PC-3 (cell line): ENCODE measurements at regions of chr3 and their contacts with region 1.

Region 1: DNA sequence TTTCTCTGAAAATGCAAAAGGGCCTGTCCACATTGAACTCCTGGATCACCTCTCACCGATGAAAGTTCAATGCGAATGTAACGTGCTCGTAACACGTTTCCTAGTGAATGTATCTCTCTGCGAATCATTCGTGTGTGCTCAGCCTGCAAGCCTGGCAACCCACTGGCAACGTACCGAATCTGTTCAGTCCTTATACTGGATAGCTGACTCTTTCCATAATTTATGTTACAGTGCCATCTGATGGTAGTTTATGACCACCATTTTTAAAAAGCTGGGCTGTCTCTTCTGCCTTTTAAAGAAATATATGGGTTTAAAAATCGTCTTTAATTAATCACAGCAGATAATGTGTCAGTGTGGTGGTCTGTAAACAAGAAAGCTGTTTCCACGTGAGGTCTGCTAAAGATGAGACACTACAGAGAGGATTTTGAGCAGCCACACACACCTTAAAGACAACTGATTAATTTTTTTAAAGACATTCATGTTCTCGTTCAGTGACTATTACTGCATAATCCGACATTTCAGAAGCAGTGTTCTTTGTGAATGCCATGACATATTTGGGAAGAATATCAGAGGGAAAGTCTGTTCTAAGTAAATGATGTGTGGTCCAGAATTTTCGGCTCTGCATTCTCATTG is 69.4 kb upstream of the FOXP1 start:
- DNase-seq: peak; percentile 76
- ATAC-seq: peak; percentile 76
- H3K4me3 ChIP-seq: peak overlapping the region; percentile 31; the same call in 1 of the 2 replicates
- H3K27ac ChIP-seq: no peak overlapping the region
- H3K4me1 ChIP-seq: peaks cover 14% of the 10 kb centered on the region
- H3K27me3 ChIP-seq: no peaks in the 10 kb centered on the region
- CTCF ChIP-seq: peak; percentile 90

Region 2: DNA sequence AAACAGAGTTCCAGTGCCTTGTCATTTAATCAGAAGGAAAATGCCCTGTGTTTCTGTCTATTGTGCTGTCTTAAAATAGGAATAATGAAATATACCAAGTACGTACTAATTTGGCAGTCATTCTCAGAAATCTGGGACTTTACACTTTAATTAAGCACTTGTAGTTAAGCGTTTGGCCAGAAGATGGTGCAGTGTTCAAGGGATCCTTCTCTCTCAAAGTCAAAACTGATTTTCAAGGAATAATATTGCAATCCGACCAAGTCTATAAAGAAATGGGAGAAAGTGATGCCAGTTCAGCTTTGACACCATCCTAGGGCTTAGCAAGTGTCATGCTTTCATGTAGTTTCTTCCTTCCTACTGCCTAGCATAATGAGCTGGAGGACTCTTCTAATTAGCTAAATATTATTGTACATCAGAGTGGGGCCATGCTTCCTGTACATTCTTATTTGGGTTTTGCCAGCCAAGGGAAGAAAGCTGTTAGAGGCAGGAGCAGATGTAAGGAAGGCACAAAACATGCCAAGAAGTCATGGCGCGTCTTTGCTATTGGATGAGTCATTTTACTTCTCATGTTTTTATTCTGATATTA is 1588.6 kb before region 1 on chr3:
- CTCF ChIA-PET with region 1: no interaction called
- POLR2A ChIA-PET with region 1: no interaction called
- intact Hi-C with region 1: loop called (anchors 10 kb)
- DNase-seq: peak; percentile 53
- ATAC-seq: no peak
- H3K4me3 ChIP-seq: no peak overlapping the region
- H3K27ac ChIP-seq: no peak overlapping the region
- H3K4me1 ChIP-seq: no peaks in the 10 kb centered on the region
- H3K27me3 ChIP-seq: peaks cover 25% of the 10 kb centered on the region
- CTCF ChIP-seq: peak; percentile 60

Region 3: DNA sequence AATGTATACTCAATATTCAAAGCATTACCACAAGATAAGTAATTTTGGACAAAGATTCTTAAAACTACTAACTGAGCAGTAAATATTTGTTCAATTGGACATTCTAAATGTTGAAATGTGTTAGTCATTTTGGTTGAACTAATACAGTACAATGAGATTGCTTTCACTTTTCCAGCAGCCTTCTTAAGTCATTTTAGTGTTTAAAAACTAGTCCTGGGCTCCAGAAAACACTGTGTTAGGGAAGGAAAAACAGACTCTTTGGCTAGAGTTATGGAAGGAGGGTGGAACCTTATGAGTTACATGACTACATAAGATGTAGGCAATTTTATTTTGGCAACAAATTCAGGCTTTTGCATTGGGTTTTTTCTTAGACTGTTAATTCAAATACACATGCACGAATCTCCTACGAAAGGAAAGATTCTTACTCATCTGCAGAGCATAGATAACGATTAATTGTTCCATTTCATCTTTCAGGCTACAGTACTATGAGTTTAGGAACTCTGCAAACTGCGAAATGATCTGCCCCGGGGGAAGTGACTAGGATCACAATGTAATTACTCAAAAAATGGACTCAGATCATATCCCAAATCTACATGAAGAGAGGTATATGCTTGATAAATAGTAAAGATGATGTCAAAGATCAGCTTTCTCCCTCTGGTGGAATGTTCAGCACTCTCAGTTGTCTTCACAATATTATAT is 847.7 kb before region 1 on chr3:
- CTCF ChIA-PET with region 1: no interaction called
- POLR2A ChIA-PET with region 1: no interaction called
- intact Hi-C with region 1: loop called (anchors 10 kb)
- DNase-seq: peak; percentile 74
- ATAC-seq: peak; percentile 56
- H3K4me3 ChIP-seq: peak overlapping the region; percentile 61
- H3K27ac ChIP-seq: peak overlapping the region; percentile 88
- H3K4me1 ChIP-seq: peaks cover 48% of the 10 kb centered on the region
- H3K27me3 ChIP-seq: no peaks in the 10 kb centered on the region
- CTCF ChIP-seq: peak; percentile 49; the same call in 1 of the 2 replicates

Region 4: DNA sequence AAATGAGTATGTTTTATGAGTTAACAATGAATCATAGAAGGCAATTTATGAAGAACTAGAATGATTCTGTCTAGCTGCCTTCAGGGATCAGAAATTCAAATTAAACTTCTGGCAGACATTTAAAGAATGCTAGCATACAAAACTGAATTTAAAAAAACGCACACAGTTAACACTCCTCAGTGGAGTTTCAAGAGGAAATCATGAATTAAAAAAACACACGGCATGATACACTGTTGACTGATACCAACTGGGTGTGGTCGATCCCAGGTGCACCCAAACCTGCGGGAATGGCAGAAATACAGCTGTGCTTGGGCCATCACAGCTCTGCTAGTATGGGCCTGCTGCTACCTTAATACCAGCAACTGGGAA is 595.4 kb before region 1 on chr3:
- CTCF ChIA-PET with region 1: no interaction called
- POLR2A ChIA-PET with region 1: interaction called, 18 read pairs
- intact Hi-C with region 1: no loop called
- DNase-seq: peak; percentile 87
- ATAC-seq: peak; percentile 41
- H3K4me3 ChIP-seq: peak overlapping the region; percentile 58
- H3K27ac ChIP-seq: peak overlapping the region; percentile 93
- H3K4me1 ChIP-seq: peaks cover 84% of the 10 kb centered on the region
- H3K27me3 ChIP-seq: no peaks in the 10 kb centered on the region
- CTCF ChIP-seq: no peak

Region 5: GRCh38 chr3:71305231-71306206 is 347.4 kb before region 1 on chr3:
- CTCF ChIA-PET with region 1: interaction called, 3 read pairs
- POLR2A ChIA-PET with region 1: no interaction called
- intact Hi-C with region 1: loop called (anchors 2 kb)
- DNase-seq: peak; percentile 38
- ATAC-seq: peak; percentile 65
- H3K4me3 ChIP-seq: peak overlapping the region; percentile 57
- H3K27ac ChIP-seq: no peak overlapping the region
- H3K4me1 ChIP-seq: peaks cover 24% of the 10 kb centered on the region
- H3K27me3 ChIP-seq: no peaks in the 10 kb centered on the region
- CTCF ChIP-seq: no peak

Region 6: GRCh38 chr3:71397046-71397445 is 255.9 kb before region 1 on chr3:
- CTCF ChIA-PET with region 1: no interaction called
- POLR2A ChIA-PET with region 1: no interaction called
- intact Hi-C with region 1: loop called (anchors 10 kb)
- DNase-seq: peak; percentile 65
- ATAC-seq: peak; percentile 46
- H3K4me3 ChIP-seq: no peak overlapping the region
- H3K27ac ChIP-seq: no peak overlapping the region
- H3K4me1 ChIP-seq: peaks cover 10% of the 10 kb centered on the region; the same call in 1 of the 2 replicates
- H3K27me3 ChIP-seq: no peaks in the 10 kb centered on the region
- CTCF ChIP-seq: peak; percentile 56

Region 7: GRCh38 chr3:71694358-71694999 is 41.6 kb after region 1 on chr3:
- CTCF ChIA-PET with region 1: no interaction called
- POLR2A ChIA-PET with region 1: no interaction called
- intact Hi-C with region 1: no loop called
- DNase-seq: peak; percentile 18
- ATAC-seq: no peak
- H3K4me3 ChIP-seq: no peak overlapping the region
- H3K27ac ChIP-seq: no peak overlapping the region
- H3K4me1 ChIP-seq: no peaks in the 10 kb centered on the region
- H3K27me3 ChIP-seq: no peaks in the 10 kb centered on the region
- CTCF ChIP-seq: no peak

Region 8: GRCh38 chr3:71817262-71817661 is 164.4 kb after region 1 on chr3:
- CTCF ChIA-PET with region 1: no interaction called
- POLR2A ChIA-PET with region 1: no interaction called
- intact Hi-C with region 1: no loop called
- DNase-seq: no peak
- ATAC-seq: no peak
- H3K4me3 ChIP-seq: no peak overlapping the region
- H3K27ac ChIP-seq: no peak overlapping the region
- H3K4me1 ChIP-seq: no peaks in the 10 kb centered on the region
- H3K27me3 ChIP-seq: peaks cover 87% of the 10 kb centered on the region
- CTCF ChIP-seq: no peak

Region 9: GRCh38 chr3:71984843-71985613 is 332.1 kb after region 1 on chr3:
- CTCF ChIA-PET with region 1: no interaction called
- POLR2A ChIA-PET with region 1: no interaction called
- intact Hi-C with region 1: no loop called
- DNase-seq: no peak
- ATAC-seq: no peak
- H3K4me3 ChIP-seq: no peak overlapping the region
- H3K27ac ChIP-seq: no peak overlapping the region
- H3K4me1 ChIP-seq: peaks cover 11% of the 10 kb centered on the region
- H3K27me3 ChIP-seq: no peaks in the 10 kb centered on the region
- CTCF ChIP-seq: no peak